ENCODE measurements at regions of chr16 and their contacts with region 1.

Region 1: DNA sequence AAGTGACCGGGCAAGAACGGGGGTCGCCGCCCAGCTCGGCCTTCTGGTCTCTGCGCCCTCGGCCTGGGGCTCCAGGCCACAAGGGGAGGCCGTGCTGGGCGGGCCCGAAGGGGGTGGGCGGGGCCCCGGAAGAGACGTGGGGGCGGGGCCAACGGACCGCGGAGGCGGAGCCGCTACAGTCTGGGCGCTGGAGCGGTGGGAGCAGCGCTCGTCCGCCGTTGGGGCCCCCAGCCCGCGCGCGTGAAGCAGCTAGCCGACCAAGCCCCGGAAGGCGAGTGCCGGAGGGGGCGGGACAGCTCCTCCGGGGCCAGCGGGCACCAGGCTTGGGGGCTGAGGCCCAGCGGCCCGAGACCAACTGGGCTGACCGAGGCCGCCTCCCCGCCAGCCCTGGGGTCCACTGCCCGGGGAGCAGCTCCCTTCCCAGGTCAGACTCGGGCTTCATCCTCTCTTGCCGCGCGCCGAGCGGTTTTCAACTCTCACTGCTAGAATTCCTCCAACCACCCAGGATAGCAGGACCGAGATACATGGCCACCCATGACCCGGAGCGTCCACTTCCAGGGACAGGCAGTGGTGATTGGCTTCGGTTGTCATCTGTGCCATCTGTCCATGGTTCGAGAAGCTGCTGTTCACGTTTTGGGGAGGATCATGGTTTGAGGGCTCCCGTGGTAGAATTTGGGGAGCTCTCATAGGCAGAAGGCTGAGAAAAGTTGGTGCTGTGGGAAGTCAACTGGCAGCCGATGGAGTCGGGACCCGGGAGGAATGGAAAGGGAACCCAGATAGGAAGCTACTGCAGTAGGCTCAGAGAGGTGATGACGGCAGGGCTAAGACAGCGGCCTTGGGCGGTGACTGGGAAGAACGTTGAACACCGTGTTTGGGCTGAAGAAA is 44.6 kb upstream of the LCMT1 start:
- DNase-seq: peak; percentile 92
- H3K4me3 ChIP-seq: peak overlapping the region; percentile 66 to 70
- H3K27ac ChIP-seq: peak overlapping the region; percentile 83 to 91
- H3K4me1 ChIP-seq: peaks cover 34% of the 10 kb centered on the region
- H3K27me3 ChIP-seq: no peaks in the 10 kb centered on the region
- CTCF ChIP-seq: no peak
- POLR2A ChIP-seq: peak; percentile 76

Region 2: DNA sequence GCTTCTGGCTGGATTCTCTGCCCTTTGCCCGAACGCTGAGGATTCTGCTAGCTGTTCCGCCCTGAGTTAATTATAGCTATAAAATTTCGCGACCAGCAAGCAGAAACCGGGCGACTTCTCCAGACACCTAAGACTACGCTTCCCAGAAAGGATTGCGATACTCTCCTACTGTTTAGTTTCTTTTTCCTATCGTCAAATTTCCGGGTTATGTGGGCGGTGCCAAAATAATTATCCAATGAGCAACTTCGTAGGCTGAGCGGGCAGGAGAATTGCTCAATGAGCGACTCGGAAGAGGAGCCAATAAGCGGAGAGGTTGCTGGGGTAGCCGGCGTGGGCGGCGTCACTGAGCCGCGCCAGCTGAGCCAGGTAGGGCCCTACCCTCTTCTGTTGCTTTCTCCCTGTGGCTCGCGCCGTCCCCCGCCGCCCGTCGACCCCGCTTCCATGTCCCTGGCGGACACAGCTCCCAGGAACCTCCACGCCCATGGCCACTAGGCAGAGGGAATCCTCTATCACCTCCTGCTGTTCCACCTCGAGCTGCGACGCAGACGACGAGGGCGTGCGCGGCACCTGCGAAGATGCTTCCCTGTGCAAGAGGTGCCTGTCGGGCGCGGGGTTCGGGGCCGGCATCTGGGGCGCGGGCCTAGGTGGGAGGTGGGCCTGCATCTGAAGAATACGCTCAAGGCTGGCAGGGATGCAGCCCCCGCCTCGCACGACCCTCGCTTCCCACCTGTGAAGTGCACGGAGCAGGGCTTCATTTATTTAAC is 44.6 kb after region 1 on chr16 and contains the start of gene LCMT1:
- intact Hi-C with region 1: loop called (anchors 10 kb)
- DNase-seq: peak; percentile 97
- H3K4me3 ChIP-seq: peak within 1 kb of the TSS; percentile 79 to 94
- H3K27ac ChIP-seq: peak within 1 kb of the TSS; percentile 82 to 88
- H3K4me1 ChIP-seq: peaks cover 11% of the 10 kb centered on the region
- H3K27me3 ChIP-seq: no peaks in the 10 kb centered on the region
- CTCF ChIP-seq: no peak
- POLR2A ChIP-seq: peak; percentile 5
- total RNA-seq, gene LCMT1: 89.1 to 101 TPM

Region 3: GRCh38 chr16:25189305-25189704 is 122.3 kb after region 1 on chr16:
- intact Hi-C with region 1: no loop called
- DNase-seq: no peak
- H3K4me3 ChIP-seq: no peak overlapping the region
- H3K27ac ChIP-seq: no peak overlapping the region
- H3K4me1 ChIP-seq: no peaks in the 10 kb centered on the region
- H3K27me3 ChIP-seq: no peaks in the 10 kb centered on the region
- CTCF ChIP-seq: no peak
- POLR2A ChIP-seq: no peak

Region 4: GRCh38 chr16:25224731-25225319 is 157.8 kb after region 1 on chr16:
- intact Hi-C with region 1: loop called (anchors 10 kb)
- DNase-seq: no peak
- H3K4me3 ChIP-seq: no peak overlapping the region
- H3K27ac ChIP-seq: no peak overlapping the region
- H3K4me1 ChIP-seq: no peaks in the 10 kb centered on the region
- H3K27me3 ChIP-seq: no peaks in the 10 kb centered on the region
- CTCF ChIP-seq: no peak
- POLR2A ChIP-seq: no peak